Activated CD4-positive, alpha-beta T cell treated with anti-CD3 and anti-CD28 coated beads for 36 hours (primary cell): ENCODE measurements at regions of chr19 and their contacts with region 1.

Region 1: GRCh38 chr19:52189735-52190486 is at the start of gene PPP2R1A:
- DNase-seq: peak; percentile 99
- ATAC-seq: peak; percentile 93
- H3K4me3 Mint-ChIP-seq: peak within 1 kb of the TSS; percentile 91
- H3K27ac Mint-ChIP-seq: peak within 1 kb of the TSS; percentile 97
- H3K4me1 Mint-ChIP-seq: peaks cover 41% of the 10 kb centered on the region
- H3K27me3 Mint-ChIP-seq: no peaks in the 10 kb centered on the region
- total RNA-seq, gene PPP2R1A: 215 to 231 TPM

Region 2: GRCh38 chr19:51108066-51108804 is 1081.7 kb before region 1 on chr19 and contains the start of gene CTU1:
- CTCF ChIA-PET with region 1: no interaction called
- POLR2A ChIA-PET with region 1: no interaction called
- intact Hi-C with region 1: loop called in 1 of 2 experiments (anchors 1 kb)
- DNase-seq: peak; percentile 99
- ATAC-seq: peak; percentile 98
- H3K4me3 Mint-ChIP-seq: peak within 1 kb of the TSS; percentile 92
- H3K27ac Mint-ChIP-seq: peak within 1 kb of the TSS; percentile 91
- H3K4me1 Mint-ChIP-seq: peaks cover 36% of the 10 kb centered on the region
- H3K27me3 Mint-ChIP-seq: no peaks in the 10 kb centered on the region
- total RNA-seq, gene CTU1: 7.2 to 9.1 TPM

Region 3: GRCh38 chr19:51926784-51927742 is 262.8 kb before region 1 on chr19 and contains the start of gene ZNF613:
- CTCF ChIA-PET with region 1: no interaction called
- POLR2A ChIA-PET with region 1: no interaction called
- intact Hi-C with region 1: loop called in 1 of 2 experiments (anchors 1 kb)
- DNase-seq: peak; percentile 91
- ATAC-seq: peak; percentile 95
- H3K4me3 Mint-ChIP-seq: peak within 1 kb of the TSS; percentile 95
- H3K27ac Mint-ChIP-seq: peak within 1 kb of the TSS; percentile 97
- H3K4me1 Mint-ChIP-seq: peaks cover 20% of the 10 kb centered on the region
- H3K27me3 Mint-ChIP-seq: no peaks in the 10 kb centered on the region
- total RNA-seq, gene ZNF613: 4.2 to 6.3 TPM

Region 4: GRCh38 chr19:52028027-52028779 is 161.7 kb before region 1 on chr19 and contains the start of gene ZNF614:
- CTCF ChIA-PET with region 1: no interaction called
- POLR2A ChIA-PET with region 1: no interaction called
- intact Hi-C with region 1: loop called in 1 of 2 experiments (anchors 1 kb)
- DNase-seq: peak; percentile 93
- ATAC-seq: peak; percentile 94
- H3K4me3 Mint-ChIP-seq: peak within 1 kb of the TSS; percentile 81
- H3K27ac Mint-ChIP-seq: peak within 1 kb of the TSS; percentile 88
- H3K4me1 Mint-ChIP-seq: peaks cover 13% of the 10 kb centered on the region
- H3K27me3 Mint-ChIP-seq: no peaks in the 10 kb centered on the region
- total RNA-seq, gene ZNF614: 9.4 to 10.6 TPM

Region 5: GRCh38 chr19:52139252-52140031 is 50.5 kb before region 1 on chr19 and contains the start of gene ZNF616:
- CTCF ChIA-PET with region 1: interaction called, 5 read pairs
- POLR2A ChIA-PET with region 1: interaction called, 3 read pairs
- intact Hi-C with region 1: loop called (anchors 1 to 2 kb)
- DNase-seq: peak; percentile 90
- ATAC-seq: peak; percentile 81
- H3K4me3 Mint-ChIP-seq: peak within 1 kb of the TSS; percentile 96
- H3K27ac Mint-ChIP-seq: peak within 1 kb of the TSS; percentile 97
- H3K4me1 Mint-ChIP-seq: peaks cover 27% of the 10 kb centered on the region
- H3K27me3 Mint-ChIP-seq: no peaks in the 10 kb centered on the region
- total RNA-seq, gene ZNF616: 13.9 to 15.7 TPM

Region 6: GRCh38 chr19:52155596-52156359 is 34.1 kb before region 1 on chr19:
- CTCF ChIA-PET with region 1: no interaction called
- POLR2A ChIA-PET with region 1: no interaction called
- intact Hi-C with region 1: no loop called
- DNase-seq: no peak
- ATAC-seq: no peak
- H3K4me3 Mint-ChIP-seq: no peak overlapping the region
- H3K27ac Mint-ChIP-seq: no peak overlapping the region
- H3K4me1 Mint-ChIP-seq: no peaks in the 10 kb centered on the region
- H3K27me3 Mint-ChIP-seq: no peaks in the 10 kb centered on the region

Region 7: GRCh38 chr19:52336117-52336790 is 146.3 kb after region 1 on chr19 and contains the start of gene ZNF610:
- CTCF ChIA-PET with region 1: no interaction called
- POLR2A ChIA-PET with region 1: no interaction called
- intact Hi-C with region 1: loop called in 1 of 2 experiments (anchors 1 kb)
- DNase-seq: peak; percentile 96
- ATAC-seq: peak; percentile 97
- H3K4me3 Mint-ChIP-seq: peak within 1 kb of the TSS; percentile 97
- H3K27ac Mint-ChIP-seq: peak within 1 kb of the TSS; percentile 96
- H3K4me1 Mint-ChIP-seq: peaks cover 10% of the 10 kb centered on the region
- H3K27me3 Mint-ChIP-seq: no peaks in the 10 kb centered on the region
- total RNA-seq, gene ZNF610: 2.3 to 3.3 TPM

Region 8: GRCh38 chr19:52637718-52638585 is 448.0 kb after region 1 on chr19 and contains the start of gene ZNF83:
- CTCF ChIA-PET with region 1: no interaction called
- POLR2A ChIA-PET with region 1: no interaction called
- intact Hi-C with region 1: loop called in 1 of 2 experiments (anchors 1 kb)
- DNase-seq: peak; percentile 99
- ATAC-seq: peak; percentile 97
- H3K4me3 Mint-ChIP-seq: peak within 1 kb of the TSS; percentile 92
- H3K27ac Mint-ChIP-seq: peak within 1 kb of the TSS; percentile 96
- H3K4me1 Mint-ChIP-seq: peaks cover 13% of the 10 kb centered on the region
- H3K27me3 Mint-ChIP-seq: no peaks in the 10 kb centered on the region
- total RNA-seq, gene ZNF83: 23.8 to 27.5 TPM